Gastrocnemius medialis (tissue), 4 donors: ENCODE measurements at regions of chr5 and their contacts with region 1.

Region 1: GRCh38 chr5:150217873-150218692 is 28.2 kb downstream of the SLC6A7 start:
- DNase-seq: peak; percentile 65 to 82
- ATAC-seq: peak; percentile 83 to 88
- H3K4me3 ChIP-seq: no peak overlapping the region
- H3K27ac ChIP-seq: no peak overlapping the region
- H3K4me1 ChIP-seq: peaks cover 0 to 7% of the 10 kb centered on the region in 2 donors
- H3K27me3 ChIP-seq: no peaks in the 10 kb centered on the region
- CTCF ChIP-seq: peak; percentile 90 to 97 (median 93)
- POLR2A ChIP-seq: no peak

Region 2: DNA sequence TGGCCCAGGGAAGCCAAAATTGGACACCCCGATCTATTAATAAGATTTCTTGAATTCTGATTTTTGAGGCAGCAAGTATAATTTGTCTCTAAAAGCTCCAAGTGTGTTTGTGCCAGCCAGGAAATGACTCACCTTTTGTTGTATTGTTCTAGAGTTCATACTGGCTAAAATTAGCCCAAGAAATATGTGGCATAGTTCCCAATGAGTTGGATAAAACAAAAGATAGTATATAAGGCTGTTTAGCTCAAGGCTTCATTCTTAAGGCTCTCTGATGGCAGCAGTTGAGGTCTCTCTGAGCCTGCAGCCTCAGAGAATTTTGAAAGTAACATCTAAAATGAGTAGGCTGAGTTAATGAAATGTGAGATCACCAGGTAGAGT is 195.9 kb before region 1 on chr5:
- in situ Hi-C with region 1: loop called in 1 of 4 experiments (anchors 25 kb)
- intact Hi-C with region 1: loop called (anchors 2 kb)
- DNase-seq: no peak
- ATAC-seq: peak; percentile 70 to 82
- H3K4me3 ChIP-seq: peak overlapping the region in 1 of 4 donors; percentile 17
- H3K27ac ChIP-seq: peak overlapping the region; percentile 77 to 82 (median 80)
- H3K4me1 ChIP-seq: peaks cover 31 to 48% of the 10 kb centered on the region in 2 donors
- H3K27me3 ChIP-seq: no peaks in the 10 kb centered on the region
- CTCF ChIP-seq: no peak
- POLR2A ChIP-seq: no peak

Region 3: GRCh38 chr5:150036513-150036912 is 181.6 kb before region 1 on chr5:
- in situ Hi-C with region 1: loop called in 1 of 4 experiments (anchors 25 kb)
- intact Hi-C with region 1: no loop called
- DNase-seq: peak; percentile 54 to 84
- ATAC-seq: peak; percentile 97 to 100
- H3K4me3 ChIP-seq: no peak overlapping the region
- H3K27ac ChIP-seq: peak overlapping the region; percentile 50 to 74 (median 63)
- H3K4me1 ChIP-seq: peaks cover 15 to 19% of the 10 kb centered on the region in 2 donors
- H3K27me3 ChIP-seq: no peaks in the 10 kb centered on the region
- CTCF ChIP-seq: no peak
- POLR2A ChIP-seq: no peak

Region 4: DNA sequence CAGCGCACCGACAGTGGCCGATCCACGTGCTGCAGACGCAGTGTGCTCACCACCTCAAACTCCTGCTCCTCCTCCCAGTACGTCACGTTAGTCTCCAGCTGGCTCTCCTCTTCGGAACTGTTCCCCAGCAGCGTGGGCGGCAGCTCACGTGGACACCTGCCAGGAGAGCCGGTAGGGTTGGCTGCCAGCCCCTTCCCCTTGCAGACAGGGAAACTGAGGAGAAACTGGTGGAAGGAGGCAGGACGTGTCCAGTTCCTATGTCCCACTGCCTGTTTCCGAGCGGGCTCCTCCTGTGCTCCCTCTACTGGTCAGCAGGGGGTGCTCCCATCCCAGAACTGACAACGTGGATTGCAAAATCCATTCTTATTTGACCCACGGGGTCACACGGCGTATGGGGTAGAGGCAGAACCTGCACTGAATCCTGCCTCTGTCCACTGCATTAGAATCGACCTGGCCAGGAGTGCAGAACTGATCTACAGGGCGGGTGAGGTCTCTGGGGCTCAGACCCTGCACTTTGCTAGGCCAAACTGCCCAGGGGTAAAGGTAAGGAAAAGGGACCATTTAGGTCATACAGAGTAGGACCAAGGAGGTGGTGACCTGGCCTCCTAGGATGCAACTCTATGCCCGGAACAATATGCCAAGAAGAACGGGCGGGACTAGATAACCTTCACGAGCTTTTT is 88.1 kb before region 1 on chr5:
- in situ Hi-C with region 1: no loop called
- intact Hi-C with region 1: loop called (anchors 1 kb)
- DNase-seq: peak; percentile 44 to 70
- ATAC-seq: peak; percentile 67 to 91
- H3K4me3 ChIP-seq: peak overlapping the region; percentile 17 to 49 (median 32)
- H3K27ac ChIP-seq: peak overlapping the region in 3 of 4 donors; percentile 25 to 76 (median 30)
- H3K4me1 ChIP-seq: peaks cover 0 to 10% of the 10 kb centered on the region in 2 donors
- H3K27me3 ChIP-seq: no peaks in the 10 kb centered on the region
- CTCF ChIP-seq: peak; percentile 84 to 93 (median 87)
- POLR2A ChIP-seq: no peak

Region 5: GRCh38 chr5:150161242-150162141 is 56.6 kb before region 1 on chr5:
- in situ Hi-C with region 1: loop called (anchors 5 kb)
- intact Hi-C with region 1: loop called (anchors 1 kb)
- DNase-seq: peak; percentile 58 to 82
- ATAC-seq: peak; percentile 60 to 83
- H3K4me3 ChIP-seq: no peak overlapping the region
- H3K27ac ChIP-seq: peak overlapping the region; percentile 76 to 84 (median 82)
- H3K4me1 ChIP-seq: peaks cover 20 to 25% of the 10 kb centered on the region in 2 donors
- H3K27me3 ChIP-seq: no peaks in the 10 kb centered on the region
- CTCF ChIP-seq: peak; percentile 95 to 98 (median 97)
- POLR2A ChIP-seq: no peak

Region 6: GRCh38 chr5:150239556-150240518 is 21.8 kb after region 1 on chr5:
- in situ Hi-C with region 1: no loop called
- intact Hi-C with region 1: loop called (anchors 1 kb)
- DNase-seq: no peak
- ATAC-seq: no peak
- H3K4me3 ChIP-seq: no peak overlapping the region
- H3K27ac ChIP-seq: peak overlapping the region in 1 of 4 donors; percentile 91
- H3K4me1 ChIP-seq: peaks cover 28 to 34% of the 10 kb centered on the region in 2 donors
- H3K27me3 ChIP-seq: no peaks in the 10 kb centered on the region
- CTCF ChIP-seq: no peak
- POLR2A ChIP-seq: no peak

Region 7: GRCh38 chr5:150272526-150272925 is 54.4 kb after region 1 on chr5:
- in situ Hi-C with region 1: no loop called
- intact Hi-C with region 1: no loop called
- DNase-seq: no peak
- ATAC-seq: no peak
- H3K4me3 ChIP-seq: no peak overlapping the region
- H3K27ac ChIP-seq: no peak overlapping the region
- H3K4me1 ChIP-seq: peaks cover 13 to 15% of the 10 kb centered on the region in 2 donors
- H3K27me3 ChIP-seq: no peaks in the 10 kb centered on the region
- CTCF ChIP-seq: peak in 1 of 5 experiments; percentile 18
- POLR2A ChIP-seq: no peak

Region 8: DNA sequence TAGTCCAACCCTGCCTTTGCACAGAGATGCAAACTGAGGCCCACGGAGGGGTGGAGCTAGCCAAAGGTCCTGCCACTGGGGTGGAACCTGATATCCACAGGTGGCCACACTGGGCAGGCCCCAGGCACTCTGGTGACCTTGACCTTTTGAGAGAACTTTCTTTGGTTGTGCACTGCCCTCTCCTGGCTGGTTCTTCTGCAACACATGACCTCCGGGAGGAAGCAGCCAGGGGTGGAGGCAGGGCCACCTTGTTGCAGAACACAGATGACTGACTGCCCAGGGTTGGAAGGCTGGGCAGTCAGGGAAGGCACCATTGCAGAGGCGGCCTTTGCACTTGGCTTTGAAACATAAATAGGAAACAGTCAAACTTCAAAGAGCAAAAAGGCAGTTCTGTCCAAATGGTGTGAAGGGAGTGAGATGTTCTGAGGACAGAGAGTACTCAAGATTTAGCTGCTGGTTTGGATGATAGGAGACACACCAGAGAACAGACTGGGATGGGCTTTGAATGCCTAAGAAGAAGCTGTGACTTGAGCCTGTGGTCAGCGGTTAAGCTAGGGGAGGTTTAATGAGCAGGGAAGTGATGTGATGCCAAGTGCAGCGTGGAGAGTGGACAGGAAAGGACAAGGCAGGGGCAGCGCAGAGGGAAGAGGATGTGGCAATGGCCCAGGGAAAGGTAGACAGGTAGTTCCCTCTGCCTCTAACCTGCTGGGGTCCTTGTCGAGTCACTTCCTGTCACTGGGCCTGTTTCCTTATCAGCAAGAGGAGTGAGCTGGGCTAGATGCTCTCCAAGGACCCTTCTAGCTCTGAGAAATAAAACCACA is 132.7 kb after region 1 on chr5:
- in situ Hi-C with region 1: no loop called
- intact Hi-C with region 1: loop called (anchors 1 kb)
- DNase-seq: peak; percentile 64 to 92
- ATAC-seq: peak; percentile 92 to 99
- H3K4me3 ChIP-seq: no peak overlapping the region
- H3K27ac ChIP-seq: peak overlapping the region in 2 of 4 donors; percentile 8 to 44
- H3K4me1 ChIP-seq: peaks cover 5 to 6% of the 10 kb centered on the region in 2 donors
- H3K27me3 ChIP-seq: no peaks in the 10 kb centered on the region
- CTCF ChIP-seq: peak; percentile 43 to 68 (median 58)
- POLR2A ChIP-seq: no peak

Region 9: DNA sequence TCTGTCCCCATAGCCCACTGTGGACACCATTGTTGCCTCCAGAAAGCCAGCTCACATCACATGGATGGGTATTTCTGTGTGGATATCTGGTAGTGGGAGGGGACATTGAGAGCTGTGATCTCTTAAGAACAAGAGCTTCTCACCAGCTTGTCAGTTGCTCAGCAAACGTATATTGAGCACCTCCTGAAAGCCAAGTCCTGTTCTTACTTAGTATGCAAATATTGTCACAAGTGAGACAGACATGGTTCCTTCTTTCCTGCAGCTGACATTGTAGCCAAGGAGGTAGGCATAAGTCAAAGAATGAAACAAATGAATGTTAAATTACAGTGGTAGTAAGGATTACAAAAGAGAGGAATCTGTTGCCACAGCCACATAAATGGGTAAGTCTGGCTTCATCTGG is 143.2 kb after region 1 on chr5:
- in situ Hi-C with region 1: no loop called
- intact Hi-C with region 1: no loop called
- DNase-seq: no peak
- ATAC-seq: no peak
- H3K4me3 ChIP-seq: no peak overlapping the region
- H3K27ac ChIP-seq: no peak overlapping the region
- H3K4me1 ChIP-seq: peaks cover 12 to 14% of the 10 kb centered on the region in 2 donors
- H3K27me3 ChIP-seq: no peaks in the 10 kb centered on the region
- CTCF ChIP-seq: no peak
- POLR2A ChIP-seq: no peak